Caco-2 (cell line): ENCODE measurements at regions of chr4 and their contacts with region 1.

Region 1: DNA sequence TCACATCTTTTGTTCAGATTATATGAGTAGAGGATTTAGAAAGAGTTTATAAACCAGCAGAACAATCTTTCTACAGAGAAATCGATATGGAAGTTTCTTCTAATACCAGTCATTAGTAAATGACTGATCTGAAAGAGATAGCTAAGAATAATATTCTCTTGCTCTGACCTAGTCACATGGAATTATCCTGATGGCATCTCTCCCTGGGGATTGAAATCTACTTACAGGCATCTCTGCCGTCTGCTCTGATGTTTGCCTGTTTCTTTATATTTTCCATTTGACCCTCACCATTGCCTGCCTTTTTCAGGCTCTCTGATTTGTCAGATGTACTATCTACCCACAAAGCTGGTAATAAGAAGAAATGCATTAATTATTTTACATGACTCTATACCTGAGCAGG is 1157.3 kb downstream of the PCDH7 start:
- DNase-seq: no peak
- H3K4me3 ChIP-seq: no peak overlapping the region
- H3K4me3 Mint-ChIP-seq: no peak overlapping the region
- H3K27ac Mint-ChIP-seq: no peak overlapping the region
- H3K4me1 ChIP-seq: no peaks in the 10 kb centered on the region
- H3K4me1 Mint-ChIP-seq: no peaks in the 10 kb centered on the region
- H3K27me3 ChIP-seq: no peaks in the 10 kb centered on the region
- H3K27me3 Mint-ChIP-seq: no peaks in the 10 kb centered on the region
- CTCF ChIP-seq: no peak

Region 2: GRCh38 chr4:31896349-31896748 is 18.9 kb after region 1 on chr4:
- CTCF ChIA-PET with region 1: no interaction called
- POLR2A ChIA-PET with region 1: no interaction called
- intact Hi-C with region 1: no loop called
- DNase-seq: no peak
- H3K4me3 ChIP-seq: no peak overlapping the region
- H3K4me3 Mint-ChIP-seq: no peak overlapping the region
- H3K27ac Mint-ChIP-seq: no peak overlapping the region
- H3K4me1 ChIP-seq: no peaks in the 10 kb centered on the region
- H3K4me1 Mint-ChIP-seq: no peaks in the 10 kb centered on the region
- H3K27me3 ChIP-seq: no peaks in the 10 kb centered on the region
- H3K27me3 Mint-ChIP-seq: no peaks in the 10 kb centered on the region
- CTCF ChIP-seq: no peak

Region 3: GRCh38 chr4:32042486-32043247 is 165.2 kb after region 1 on chr4:
- CTCF ChIA-PET with region 1: no interaction called
- POLR2A ChIA-PET with region 1: no interaction called
- intact Hi-C with region 1: loop called (anchors 5 kb)
- DNase-seq: no peak
- H3K4me3 ChIP-seq: no peak overlapping the region
- H3K4me3 Mint-ChIP-seq: no peak overlapping the region
- H3K27ac Mint-ChIP-seq: no peak overlapping the region
- H3K4me1 ChIP-seq: peaks cover 3% of the 10 kb centered on the region; the same call in 1 of the 2 replicates
- H3K4me1 Mint-ChIP-seq: no peaks in the 10 kb centered on the region
- H3K27me3 ChIP-seq: no peaks in the 10 kb centered on the region
- H3K27me3 Mint-ChIP-seq: no peaks in the 10 kb centered on the region
- CTCF ChIP-seq: peak in 1 of 2 experiments; percentile 28

Region 4: GRCh38 chr4:32102896-32103295 is 225.5 kb after region 1 on chr4:
- CTCF ChIA-PET with region 1: no interaction called
- POLR2A ChIA-PET with region 1: no interaction called
- intact Hi-C with region 1: no loop called
- DNase-seq: no peak
- H3K4me3 ChIP-seq: no peak overlapping the region
- H3K4me3 Mint-ChIP-seq: no peak overlapping the region
- H3K27ac Mint-ChIP-seq: no peak overlapping the region
- H3K4me1 ChIP-seq: no peaks in the 10 kb centered on the region
- H3K4me1 Mint-ChIP-seq: no peaks in the 10 kb centered on the region
- H3K27me3 ChIP-seq: no peaks in the 10 kb centered on the region
- H3K27me3 Mint-ChIP-seq: no peaks in the 10 kb centered on the region
- CTCF ChIP-seq: no peak